Activated CD4-positive, alpha-beta memory T cell treated with anti-CD3 and anti-CD28 coated beads for 36 hours (primary cell): ENCODE measurements at regions of chr1 and their contacts with region 1.

Region 1: GRCh38 chr1:89804642-89805237 is 16.1 kb upstream of the LRRC8D start:
- DNase-seq: peak; percentile 90
- H3K4me3 Mint-ChIP-seq: no peak overlapping the region
- H3K27ac Mint-ChIP-seq: no peak overlapping the region
- H3K4me1 Mint-ChIP-seq: no peaks in the 10 kb centered on the region
- H3K27me3 Mint-ChIP-seq: no peaks in the 10 kb centered on the region

Region 2: GRCh38 chr1:89757532-89757931 is 47.2 kb before region 1 on chr1:
- CTCF ChIA-PET with region 1: no interaction called
- POLR2A ChIA-PET with region 1: no interaction called
- intact Hi-C with region 1: no loop called
- DNase-seq: peak; percentile 82
- H3K4me3 Mint-ChIP-seq: peak overlapping the region; percentile 57
- H3K27ac Mint-ChIP-seq: peak overlapping the region; percentile 77
- H3K4me1 Mint-ChIP-seq: peaks cover 74% of the 10 kb centered on the region
- H3K27me3 Mint-ChIP-seq: no peaks in the 10 kb centered on the region

Region 3: GRCh38 chr1:89942825-89943688 is 138.3 kb after region 1 on chr1:
- CTCF ChIA-PET with region 1: no interaction called
- POLR2A ChIA-PET with region 1: no interaction called
- intact Hi-C with region 1: no loop called
- DNase-seq: no peak
- H3K4me3 Mint-ChIP-seq: no peak overlapping the region
- H3K27ac Mint-ChIP-seq: no peak overlapping the region
- H3K4me1 Mint-ChIP-seq: peaks cover 15% of the 10 kb centered on the region
- H3K27me3 Mint-ChIP-seq: no peaks in the 10 kb centered on the region

Region 4: GRCh38 chr1:89987170-89987819 is 182.6 kb after region 1 on chr1:
- CTCF ChIA-PET with region 1: interaction called, 31 read pairs
- POLR2A ChIA-PET with region 1: interaction called, 3 read pairs
- intact Hi-C with region 1: loop called (anchors 1 kb)
- DNase-seq: peak; percentile 50
- H3K4me3 Mint-ChIP-seq: no peak overlapping the region
- H3K27ac Mint-ChIP-seq: no peak overlapping the region
- H3K4me1 Mint-ChIP-seq: no peaks in the 10 kb centered on the region
- H3K27me3 Mint-ChIP-seq: no peaks in the 10 kb centered on the region